IMR-90 (cell line): ENCODE measurements at regions of chr10 and their contacts with region 1.

Region 1: GRCh38 chr10:114714281-114714741 is 56.2 kb upstream of the ABLIM1 start:
- DNase-seq: peak; percentile 98
- ATAC-seq: peak; percentile 95
- H3K4me3 ChIP-seq: no peak overlapping the region
- H3K27ac ChIP-seq: peak overlapping the region; percentile 76
- H3K4me1 ChIP-seq: peaks cover 14% of the 10 kb centered on the region
- H3K27me3 ChIP-seq: no peaks in the 10 kb centered on the region
- CTCF ChIP-seq: no peak
- POLR2A ChIP-seq: no peak
- RAD21 ChIP-seq: no peak

Region 2: DNA sequence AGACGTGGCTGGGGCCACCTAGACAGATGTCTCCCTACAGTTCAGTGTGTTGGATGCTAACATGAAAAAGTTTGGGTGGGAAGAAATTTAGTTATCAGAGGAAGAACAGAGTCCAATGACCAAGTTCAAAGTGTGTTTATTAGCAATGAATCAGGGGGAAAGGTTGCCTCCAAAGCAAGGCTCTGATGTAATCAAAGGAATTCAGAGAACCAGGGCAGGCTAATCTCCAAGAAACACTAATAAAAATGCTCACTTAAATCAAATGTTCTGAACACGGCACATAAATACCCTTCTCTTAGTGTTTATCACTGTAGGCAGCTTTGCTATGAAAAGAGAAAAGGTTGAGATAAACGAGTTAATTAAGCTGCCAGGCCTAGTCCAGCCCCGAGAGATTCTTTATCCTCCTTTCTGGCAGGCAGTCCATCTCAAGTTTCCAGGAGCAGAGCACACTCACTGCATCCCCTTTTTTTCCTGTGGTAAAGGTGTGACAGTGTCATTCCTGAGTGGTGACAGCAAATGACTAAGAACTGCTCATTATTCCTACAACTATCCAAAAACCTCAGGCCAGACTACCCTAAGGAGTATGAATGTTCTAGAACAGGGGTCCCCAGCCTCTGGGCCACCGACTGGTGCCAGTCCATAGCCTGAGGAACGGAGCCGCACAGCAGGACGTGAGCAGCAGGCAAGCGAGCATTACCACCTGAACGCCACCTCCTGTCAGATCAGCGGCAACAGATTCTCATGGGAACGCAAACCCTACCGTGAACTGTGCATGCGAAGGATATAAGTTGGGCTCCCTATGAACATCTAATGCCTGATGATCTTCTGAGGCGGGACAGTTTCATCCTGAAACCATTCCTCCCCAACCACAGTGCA is 40.4 kb after region 1 on chr10:
- CTCF ChIA-PET with region 1: interaction called, 3 read pairs
- POLR2A ChIA-PET with region 1: no interaction called
- dilution Hi-C with region 1: no loop called
- in situ Hi-C with region 1: no loop called
- intact Hi-C with region 1: loop called (anchors 1 kb)
- DNase-seq: peak; percentile 68
- ATAC-seq: peak; percentile 64
- H3K4me3 ChIP-seq: no peak overlapping the region
- H3K27ac ChIP-seq: no peak overlapping the region
- H3K4me1 ChIP-seq: peaks cover 17% of the 10 kb centered on the region
- H3K27me3 ChIP-seq: no peaks in the 10 kb centered on the region
- CTCF ChIP-seq: no peak
- POLR2A ChIP-seq: no peak
- RAD21 ChIP-seq: no peak

Region 3: GRCh38 chr10:114767101-114767985 is 53.0 kb after region 1 on chr10:
- CTCF ChIA-PET with region 1: no interaction called
- POLR2A ChIA-PET with region 1: no interaction called
- dilution Hi-C with region 1: no loop called
- in situ Hi-C with region 1: no loop called
- intact Hi-C with region 1: loop called (anchors 5 kb)
- DNase-seq: peak; percentile 74
- ATAC-seq: peak; percentile 75
- H3K4me3 ChIP-seq: peak overlapping the region; percentile 75
- H3K27ac ChIP-seq: no peak overlapping the region; the same call in 1 of the 2 replicates
- H3K4me1 ChIP-seq: no peaks in the 10 kb centered on the region
- H3K27me3 ChIP-seq: no peaks in the 10 kb centered on the region; the same call in 1 of the 2 replicates
- CTCF ChIP-seq: no peak
- POLR2A ChIP-seq: no peak
- RAD21 ChIP-seq: no peak